Activated T-helper 2 cell treated with anti-CD3 and anti-CD28 coated beads, Interferon-gamma antibody, Interleukin-2, Interleukin-4, amounts not matched to agents 10 μg/mL and 5 μg/mL and 100 μg/mL, durations not matched to agents 14 hours and 24 hours and 36 hours (primary cell): ENCODE measurements at regions of chr2 and their contacts with region 1.

Region 1: GRCh38 chr2:33475224-33476130 is 972 bp upstream of the RASGRP3 start:
- DNase-seq: peak; percentile 77
- H3K4me3 Mint-ChIP-seq: peak overlapping the region; percentile 83
- H3K27ac Mint-ChIP-seq: peak overlapping the region; percentile 96
- H3K4me1 Mint-ChIP-seq: peaks cover 30% of the 10 kb centered on the region
- H3K27me3 Mint-ChIP-seq: peaks cover 8% of the 10 kb centered on the region

Region 2: GRCh38 chr2:33488715-33489540 is 13.5 kb after region 1 on chr2:
- intact Hi-C with region 1: loop called (anchors 1 kb)
- DNase-seq: no peak
- H3K4me3 Mint-ChIP-seq: no peak overlapping the region
- H3K27ac Mint-ChIP-seq: peak overlapping the region; percentile 74
- H3K4me1 Mint-ChIP-seq: peaks cover 43% of the 10 kb centered on the region
- H3K27me3 Mint-ChIP-seq: peaks cover 18% of the 10 kb centered on the region

Region 3: DNA sequence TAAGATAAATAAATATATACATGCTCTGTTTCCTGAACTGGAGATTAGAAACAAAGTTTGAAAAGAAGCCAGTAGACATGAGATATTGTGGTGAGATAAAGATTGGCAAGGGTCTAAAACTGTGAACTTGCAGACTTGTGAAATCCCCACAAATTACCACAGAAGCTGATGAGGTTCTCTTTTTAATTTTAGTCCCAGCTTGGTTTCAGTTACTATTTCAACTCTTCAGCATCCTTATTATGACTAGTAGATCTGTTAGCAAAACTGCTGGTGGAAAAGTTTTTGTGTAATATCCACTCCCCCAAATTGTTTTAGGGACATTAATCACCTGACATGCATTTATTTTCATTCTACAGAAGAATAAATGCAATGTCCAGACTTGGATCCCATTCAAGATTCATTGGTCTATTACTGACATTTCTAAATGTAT is 21.8 kb after region 1 on chr2:
- intact Hi-C with region 1: loop called (anchors 1 kb)
- DNase-seq: no peak
- H3K4me3 Mint-ChIP-seq: peak overlapping the region; percentile 11
- H3K27ac Mint-ChIP-seq: no peak overlapping the region
- H3K4me1 Mint-ChIP-seq: peaks cover 53% of the 10 kb centered on the region
- H3K27me3 Mint-ChIP-seq: peaks cover 15% of the 10 kb centered on the region

Region 4: GRCh38 chr2:33526132-33526531 is 50.7 kb after region 1 on chr2:
- intact Hi-C with region 1: loop called (anchors 2 kb)
- DNase-seq: no peak
- H3K4me3 Mint-ChIP-seq: no peak overlapping the region
- H3K27ac Mint-ChIP-seq: peak overlapping the region; percentile 57
- H3K4me1 Mint-ChIP-seq: peaks cover 23% of the 10 kb centered on the region
- H3K27me3 Mint-ChIP-seq: no peaks in the 10 kb centered on the region